ENCODE measurements at regions of chr17 and their contacts with region 1.

Region 1: GRCh38 chr17:67376737-67377487 is at the start of gene PITPNC1:
- DNase-seq: peak; percentile 88 to 94 (median 89)
- ATAC-seq: peak; percentile 69 to 89 (median 82)
- H3K4me3 ChIP-seq: peak within 1 kb of the TSS; percentile 62 to 96 (median 88)
- H3K27ac ChIP-seq: peak within 1 kb of the TSS; percentile 88 to 97 (median 95)
- H3K4me1 ChIP-seq: peaks cover 0 to 43% (median 16%) of the 10 kb centered on the region in 12 donors
- H3K27me3 ChIP-seq: no peaks in the 10 kb centered on the region
- CTCF ChIP-seq: peak in 3 of 12 donors; percentile 10 to 19 (median 15)
- POLR2A ChIP-seq: peak; percentile 31 to 84
- total RNA-seq, gene PITPNC1: 8.4 to 20.8 (median 11.3) TPM

Region 2: DNA sequence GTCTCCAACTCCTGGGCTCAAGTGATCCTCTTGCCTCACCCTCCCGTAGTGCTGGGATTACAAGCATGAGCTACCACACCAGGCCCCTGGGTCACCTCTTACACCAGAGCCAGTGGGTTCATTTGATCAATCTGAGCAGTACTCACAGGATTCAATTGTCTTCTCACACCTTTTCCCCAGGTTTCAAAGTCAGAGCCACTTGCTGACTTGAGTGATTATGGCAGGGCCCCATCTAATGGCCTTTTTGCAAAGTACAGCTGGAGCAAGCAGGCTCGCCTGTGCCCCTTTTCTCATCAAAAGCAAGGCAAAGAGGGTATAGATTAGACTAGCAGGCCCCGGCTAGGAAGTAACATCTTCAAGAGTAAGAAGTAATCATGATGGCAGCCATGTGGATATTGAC is 226.0 kb after region 1 on chr17:
- intact Hi-C with region 1: loop called in 7 of 10 experiments (anchors 5 to 10 kb)
- DNase-seq: no peak
- ATAC-seq: no peak
- H3K4me3 ChIP-seq: no peak overlapping the region
- H3K27ac ChIP-seq: no peak overlapping the region
- H3K4me1 ChIP-seq: peaks cover 0 to 42% (median 31%) of the 10 kb centered on the region in 12 donors
- H3K27me3 ChIP-seq: no peaks in the 10 kb centered on the region
- CTCF ChIP-seq: peak in 9 of 12 donors; percentile 12 to 29 (median 25)
- POLR2A ChIP-seq: no peak

Region 3: GRCh38 chr17:67629971-67630320 is 253.0 kb after region 1 on chr17:
- intact Hi-C with region 1: loop called in 8 of 10 experiments (anchors 2 to 5 kb)
- DNase-seq: no peak
- ATAC-seq: peak in 2 of 4 donors; percentile 49 to 54
- H3K4me3 ChIP-seq: no peak overlapping the region
- H3K27ac ChIP-seq: peak overlapping the region in 1 of 12 donors; percentile 29
- H3K4me1 ChIP-seq: peaks cover 0 to 23% (median 5%) of the 10 kb centered on the region in 12 donors
- H3K27me3 ChIP-seq: no peaks in the 10 kb centered on the region
- CTCF ChIP-seq: peak; percentile 17 to 57 (median 38)
- POLR2A ChIP-seq: no peak

Region 4: GRCh38 chr17:67637917-67638641 is 261.2 kb after region 1 on chr17:
- intact Hi-C with region 1: loop called in 3 of 10 experiments (anchors 2 to 5 kb)
- DNase-seq: no peak
- ATAC-seq: no peak
- H3K4me3 ChIP-seq: no peak overlapping the region
- H3K27ac ChIP-seq: no peak overlapping the region
- H3K4me1 ChIP-seq: peaks cover 0 to 27% (median 9%) of the 10 kb centered on the region in 12 donors
- H3K27me3 ChIP-seq: no peaks in the 10 kb centered on the region
- CTCF ChIP-seq: no peak
- POLR2A ChIP-seq: no peak

Region 5: GRCh38 chr17:67689534-67690177 is 312.7 kb after region 1 on chr17:
- intact Hi-C with region 1: loop called (anchors 1 to 2 kb)
- DNase-seq: peak in 2 of 5 donors; percentile 25 to 41
- ATAC-seq: peak in 3 of 4 donors; percentile 52 to 66 (median 58)
- H3K4me3 ChIP-seq: no peak overlapping the region
- H3K27ac ChIP-seq: no peak overlapping the region
- H3K4me1 ChIP-seq: peaks cover 0 to 6% (median 0%) of the 10 kb centered on the region in 12 donors
- H3K27me3 ChIP-seq: no peaks in the 10 kb centered on the region
- CTCF ChIP-seq: peak; percentile 67 to 86 (median 82)
- POLR2A ChIP-seq: no peak